PC-3 (cell line): ENCODE measurements at regions of chr6 and their contacts with region 1.

Region 1: DNA sequence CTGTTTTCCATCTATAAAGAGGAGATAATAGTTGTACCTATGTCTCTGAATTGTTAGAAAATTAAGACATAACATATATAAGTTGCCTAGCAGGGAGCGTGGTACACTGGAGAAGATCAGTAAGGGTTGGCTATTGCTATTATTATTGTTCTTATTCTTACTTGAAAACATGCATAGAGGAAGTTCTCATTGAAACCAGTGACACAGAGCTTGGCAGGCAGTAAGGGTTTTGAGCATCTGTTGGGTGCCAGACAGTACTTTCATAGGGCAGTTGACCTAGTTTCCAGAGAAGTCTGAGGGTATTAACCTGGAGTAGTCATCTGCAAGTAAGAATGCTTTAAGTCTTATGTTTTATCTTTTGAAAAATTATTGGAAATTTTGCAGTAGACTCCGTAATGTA is 13.3 kb upstream of the SGK1 start:
- DNase-seq: no peak
- ATAC-seq: no peak
- H3K4me3 ChIP-seq: no peak overlapping the region
- H3K27ac ChIP-seq: no peak overlapping the region
- H3K4me1 ChIP-seq: no peaks in the 10 kb centered on the region
- H3K27me3 ChIP-seq: no peaks in the 10 kb centered on the region
- CTCF ChIP-seq: no peak

Region 2: DNA sequence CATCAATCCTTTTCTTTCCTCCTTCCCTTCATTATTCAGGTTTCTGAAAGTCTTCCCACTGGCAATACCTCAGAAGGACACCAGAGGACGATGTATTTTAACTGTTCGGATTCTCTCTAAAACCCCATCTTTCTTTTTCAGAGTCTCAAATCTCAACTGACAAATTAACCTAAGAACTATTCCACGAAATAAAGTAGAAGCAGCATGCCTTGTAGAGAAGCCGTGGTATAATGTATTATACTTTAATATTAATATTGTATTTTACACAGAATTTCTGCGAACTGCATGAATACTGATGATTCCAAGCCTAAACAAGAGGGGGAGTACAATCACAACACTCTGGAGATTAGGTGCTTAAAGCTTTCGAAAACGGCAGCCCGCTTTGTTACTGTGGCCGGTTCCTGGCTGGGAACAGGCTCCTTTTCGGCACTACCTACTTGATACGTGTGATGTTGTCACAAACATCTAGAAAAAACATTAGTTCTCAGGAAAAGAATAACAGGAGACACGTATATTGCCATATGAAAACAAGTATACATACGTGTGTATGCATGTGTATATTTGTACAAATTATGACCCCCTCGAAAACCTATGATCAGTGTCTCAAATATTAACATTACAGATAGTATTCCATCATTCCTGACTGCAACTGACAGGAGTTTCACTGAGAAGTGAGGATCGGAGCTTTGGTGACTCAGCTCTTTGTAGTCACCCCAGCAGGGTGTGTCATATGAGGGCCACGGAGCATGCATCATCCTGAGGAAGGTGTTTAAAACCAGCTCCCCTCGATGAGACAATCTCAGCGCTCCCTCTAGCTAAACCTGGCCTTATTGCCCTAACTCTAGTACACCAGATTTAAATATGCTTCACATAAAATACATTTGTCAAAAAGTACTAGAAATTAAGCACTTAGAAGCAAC is 762.0 kb before region 1 on chr6:
- CTCF ChIA-PET with region 1: no interaction called
- POLR2A ChIA-PET with region 1: no interaction called
- intact Hi-C with region 1: no loop called
- DNase-seq: peak; percentile 90
- ATAC-seq: peak; percentile 93
- H3K4me3 ChIP-seq: peak overlapping the region; percentile 74
- H3K27ac ChIP-seq: peak overlapping the region; percentile 95
- H3K4me1 ChIP-seq: peaks cover 30% of the 10 kb centered on the region
- H3K27me3 ChIP-seq: no peaks in the 10 kb centered on the region
- CTCF ChIP-seq: peak; percentile 85

Region 3: DNA sequence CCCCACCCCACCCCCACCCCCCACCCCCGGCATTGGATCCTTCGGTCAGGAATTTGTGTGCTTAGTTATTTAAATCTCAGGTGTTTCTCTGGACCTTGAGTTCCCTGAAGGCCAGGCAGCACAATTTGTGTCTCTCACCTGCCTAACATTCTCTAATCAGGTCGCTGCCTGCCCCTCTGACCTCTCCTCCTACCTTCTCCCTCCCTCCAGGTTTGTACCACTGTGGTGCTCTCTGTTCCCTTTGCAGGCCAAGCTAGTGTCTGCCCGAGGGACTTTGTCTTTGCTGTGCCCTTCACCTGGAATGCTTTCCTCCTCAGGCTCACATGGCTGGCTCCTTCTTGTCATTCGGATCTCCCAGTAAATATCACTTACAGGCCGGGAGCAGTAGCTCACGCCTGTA is 147.4 kb before region 1 on chr6:
- CTCF ChIA-PET with region 1: interaction called, 11 read pairs
- POLR2A ChIA-PET with region 1: no interaction called
- intact Hi-C with region 1: no loop called
- DNase-seq: no peak
- ATAC-seq: no peak
- H3K4me3 ChIP-seq: no peak overlapping the region
- H3K27ac ChIP-seq: no peak overlapping the region
- H3K4me1 ChIP-seq: no peaks in the 10 kb centered on the region
- H3K27me3 ChIP-seq: no peaks in the 10 kb centered on the region
- CTCF ChIP-seq: no peak

Region 4: GRCh38 chr6:134416418-134417154 is 85.3 kb after region 1 on chr6:
- CTCF ChIA-PET with region 1: no interaction called
- POLR2A ChIA-PET with region 1: no interaction called
- intact Hi-C with region 1: no loop called
- DNase-seq: no peak
- ATAC-seq: no peak
- H3K4me3 ChIP-seq: no peak overlapping the region
- H3K27ac ChIP-seq: no peak overlapping the region
- H3K4me1 ChIP-seq: peaks cover 20% of the 10 kb centered on the region
- H3K27me3 ChIP-seq: no peaks in the 10 kb centered on the region
- CTCF ChIP-seq: no peak

Region 5: GRCh38 chr6:134835993-134836392 is 504.7 kb after region 1 on chr6:
- CTCF ChIA-PET with region 1: no interaction called
- POLR2A ChIA-PET with region 1: no interaction called
- intact Hi-C with region 1: no loop called
- DNase-seq: no peak
- ATAC-seq: no peak
- H3K4me3 ChIP-seq: no peak overlapping the region
- H3K27ac ChIP-seq: no peak overlapping the region
- H3K4me1 ChIP-seq: no peaks in the 10 kb centered on the region
- H3K27me3 ChIP-seq: no peaks in the 10 kb centered on the region
- CTCF ChIP-seq: no peak